GM23248 (cell line): ENCODE measurements at regions of chr7 and their contacts with region 1.

Region 1: GRCh38 chr7:44867073-44867995 is 18.0 kb downstream of the PURB start:
- DNase-seq: peak; percentile 94
- H3K4me3 ChIP-seq: no peak overlapping the region
- H3K27ac ChIP-seq: no peak overlapping the region
- H3K4me1 ChIP-seq: peaks cover 10% of the 10 kb centered on the region
- H3K27me3 ChIP-seq: no peaks in the 10 kb centered on the region

Region 2: GRCh38 chr7:44921607-44922359 is 54.4 kb after region 1 on chr7:
- in situ Hi-C with region 1: loop called (anchors 5 kb)
- DNase-seq: peak; percentile 82
- H3K4me3 ChIP-seq: no peak overlapping the region
- H3K27ac ChIP-seq: no peak overlapping the region
- H3K4me1 ChIP-seq: no peaks in the 10 kb centered on the region
- H3K27me3 ChIP-seq: no peaks in the 10 kb centered on the region

Region 3: DNA sequence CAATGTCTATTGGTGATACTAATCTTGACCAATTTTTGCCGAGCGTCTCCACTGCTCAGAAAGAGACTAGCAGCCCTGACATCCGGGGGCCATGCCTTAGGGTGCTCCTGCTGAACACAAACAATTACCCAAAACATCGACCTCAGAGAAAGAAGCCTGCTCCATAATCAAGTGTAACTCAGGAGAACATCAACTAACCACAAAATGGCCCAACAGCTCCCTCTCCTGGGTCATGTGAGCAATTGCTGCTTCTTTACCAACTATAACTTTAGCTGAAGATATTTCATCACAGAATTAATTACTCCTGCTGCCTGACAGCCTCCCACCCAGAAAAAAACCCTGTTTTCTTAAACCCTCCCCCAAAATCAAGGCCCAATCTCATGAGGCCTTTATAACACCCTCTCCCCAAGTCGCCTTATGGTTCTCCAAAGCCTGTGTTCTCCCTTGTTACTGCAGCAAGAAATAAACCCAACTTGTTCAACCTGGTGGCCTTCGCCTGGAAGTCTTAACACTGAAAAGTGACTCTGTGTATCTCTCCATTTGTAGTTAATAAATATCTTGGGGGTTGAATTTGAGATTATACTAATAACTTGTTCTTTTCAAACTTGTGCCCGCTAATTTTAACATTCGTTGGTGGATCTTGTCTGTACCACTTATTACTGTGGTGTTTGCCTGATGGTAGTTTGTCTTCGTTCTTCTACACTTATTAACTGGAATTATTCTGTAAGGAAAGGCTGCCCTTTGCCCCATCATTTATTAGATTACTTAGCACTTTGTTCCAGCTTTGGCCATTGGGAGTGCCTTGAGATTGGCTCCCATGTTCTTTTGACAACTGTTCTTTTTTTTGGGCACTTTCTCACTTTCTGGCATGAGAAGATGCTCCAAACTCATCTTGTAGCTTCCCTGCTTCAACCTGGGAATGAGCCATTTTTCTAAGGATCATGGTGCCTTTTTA is 269.0 kb after region 1 on chr7:
- in situ Hi-C with region 1: loop called (anchors 25 kb)
- DNase-seq: peak; percentile 77
- H3K4me3 ChIP-seq: no peak overlapping the region
- H3K27ac ChIP-seq: no peak overlapping the region
- H3K4me1 ChIP-seq: no peaks in the 10 kb centered on the region; the same call in 1 of the 2 replicates
- H3K27me3 ChIP-seq: no peaks in the 10 kb centered on the region

Region 4: DNA sequence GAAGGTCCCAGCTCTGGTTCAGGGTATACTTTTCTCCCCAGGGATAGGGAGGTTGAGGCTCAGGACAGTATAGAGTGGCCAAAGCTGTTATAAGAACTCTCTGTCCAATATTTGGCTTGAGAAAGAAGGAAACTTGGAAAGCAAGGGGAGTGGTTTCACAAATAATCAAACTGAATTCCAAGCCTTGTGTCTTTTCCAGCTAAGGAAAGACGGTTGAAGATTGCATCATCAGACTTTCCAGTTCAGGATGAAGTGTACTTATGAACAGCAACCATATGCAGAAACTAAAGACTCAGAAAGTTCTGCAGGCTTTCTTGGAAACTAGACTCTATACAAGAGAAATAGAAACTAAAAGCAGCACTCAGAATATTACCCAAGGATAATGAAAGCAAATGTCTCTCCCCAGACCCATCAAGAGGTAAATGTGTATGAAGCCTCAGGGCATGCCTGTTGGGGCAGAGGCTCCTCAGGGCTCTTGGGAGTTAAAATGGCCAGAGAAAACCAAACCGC is 336.7 kb after region 1 on chr7:
- in situ Hi-C with region 1: no loop called
- DNase-seq: peak; percentile 57
- H3K4me3 ChIP-seq: peak overlapping the region; percentile 55
- H3K27ac ChIP-seq: no peak overlapping the region
- H3K4me1 ChIP-seq: peaks cover 19% of the 10 kb centered on the region
- H3K27me3 ChIP-seq: peaks cover 30% of the 10 kb centered on the region